MCF 10A (cell line): ENCODE measurements at regions of chr14 and their contacts with region 1.

Region 1: GRCh38 chr14:23588884-23589598 is 10.5 kb upstream of the JPH4 start:
- DNase-seq: peak; percentile 84
- H3K4me3 Mint-ChIP-seq: no peak overlapping the region
- H3K27ac Mint-ChIP-seq: no peak overlapping the region
- H3K4me1 Mint-ChIP-seq: no peaks in the 10 kb centered on the region
- H3K27me3 Mint-ChIP-seq: no peaks in the 10 kb centered on the region
- CTCF ChIP-seq: peak; percentile 74

Region 2: GRCh38 chr14:23916004-23916403 is 327.0 kb after region 1 on chr14:
- CTCF ChIA-PET with region 1: interaction called, 45 read pairs
- POLR2A ChIA-PET with region 1: interaction called, 6 read pairs
- intact Hi-C with region 1: no loop called
- DNase-seq: no peak
- H3K4me3 Mint-ChIP-seq: no peak overlapping the region
- H3K27ac Mint-ChIP-seq: no peak overlapping the region
- H3K4me1 Mint-ChIP-seq: no peaks in the 10 kb centered on the region
- H3K27me3 Mint-ChIP-seq: no peaks in the 10 kb centered on the region
- CTCF ChIP-seq: no peak

Region 3: GRCh38 chr14:23929822-23930294 is 340.8 kb after region 1 on chr14:
- CTCF ChIA-PET with region 1: interaction called, 16 read pairs
- POLR2A ChIA-PET with region 1: no interaction called
- intact Hi-C with region 1: loop called (anchors 2 kb)
- DNase-seq: peak; percentile 80
- H3K4me3 Mint-ChIP-seq: no peak overlapping the region
- H3K27ac Mint-ChIP-seq: no peak overlapping the region
- H3K4me1 Mint-ChIP-seq: no peaks in the 10 kb centered on the region
- H3K27me3 Mint-ChIP-seq: no peaks in the 10 kb centered on the region
- CTCF ChIP-seq: peak; percentile 73